ENCODE measurements at regions of chr2 and their contacts with region 1.

Region 1: GRCh38 chr2:119950966-119951365 is 61.9 kb upstream of the EPB41L5 start:
- DNase-seq: no peak
- H3K4me3 Mint-ChIP-seq: no peak overlapping the region
- H3K27ac Mint-ChIP-seq: no peak overlapping the region
- H3K4me1 Mint-ChIP-seq: peaks cover 35% of the 10 kb centered on the region
- H3K27me3 Mint-ChIP-seq: no peaks in the 10 kb centered on the region

Region 2: DNA sequence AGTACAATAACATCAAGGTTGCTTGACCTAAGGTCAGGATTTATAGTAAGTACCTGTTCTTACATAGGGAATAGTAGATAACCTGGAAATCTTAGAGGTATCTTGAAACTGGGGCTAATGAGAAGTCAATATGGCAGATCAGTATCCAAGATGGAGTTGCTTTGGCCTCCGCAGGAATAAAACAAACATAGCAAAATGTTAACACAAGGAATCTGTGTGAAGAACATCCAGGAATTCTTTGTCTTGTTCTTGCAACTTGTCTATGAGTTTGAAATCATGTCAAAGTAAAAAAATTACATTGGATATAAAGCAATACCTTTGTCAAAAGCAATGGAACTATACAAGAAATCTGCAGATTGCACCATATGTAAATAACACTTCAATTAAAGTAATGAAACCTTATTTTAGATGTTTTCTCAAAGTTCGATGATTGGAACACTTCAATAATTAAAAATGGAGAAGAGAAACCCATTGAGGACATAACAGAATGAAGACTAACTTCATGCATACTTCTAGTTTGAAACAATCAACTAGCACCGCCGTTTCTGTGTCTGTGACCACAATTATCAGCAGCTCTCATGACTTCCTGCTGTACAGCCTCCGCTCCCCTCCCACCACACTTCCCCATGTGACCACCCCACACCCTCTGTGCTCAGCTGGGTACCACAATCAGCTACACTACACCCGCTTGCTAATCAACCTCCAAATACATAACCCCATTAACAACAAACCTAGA is 612.0 kb before region 1 on chr2:
- CTCF ChIA-PET with region 1: no interaction called
- POLR2A ChIA-PET with region 1: no interaction called
- intact Hi-C with region 1: no loop called
- DNase-seq: peak; percentile 28
- H3K4me3 Mint-ChIP-seq: no peak overlapping the region
- H3K27ac Mint-ChIP-seq: no peak overlapping the region
- H3K4me1 Mint-ChIP-seq: peaks cover 13% of the 10 kb centered on the region
- H3K27me3 Mint-ChIP-seq: no peaks in the 10 kb centered on the region

Region 3: GRCh38 chr2:119713804-119714490 is 237.0 kb before region 1 on chr2:
- CTCF ChIA-PET with region 1: no interaction called
- POLR2A ChIA-PET with region 1: no interaction called
- intact Hi-C with region 1: no loop called
- DNase-seq: no peak
- H3K4me3 Mint-ChIP-seq: no peak overlapping the region
- H3K27ac Mint-ChIP-seq: no peak overlapping the region
- H3K4me1 Mint-ChIP-seq: peaks cover 4% of the 10 kb centered on the region
- H3K27me3 Mint-ChIP-seq: no peaks in the 10 kb centered on the region

Region 4: GRCh38 chr2:119856469-119856912 is 94.5 kb before region 1 on chr2:
- CTCF ChIA-PET with region 1: no interaction called
- POLR2A ChIA-PET with region 1: no interaction called
- intact Hi-C with region 1: no loop called
- DNase-seq: no peak
- H3K4me3 Mint-ChIP-seq: no peak overlapping the region
- H3K27ac Mint-ChIP-seq: no peak overlapping the region
- H3K4me1 Mint-ChIP-seq: peaks cover 40% of the 10 kb centered on the region
- H3K27me3 Mint-ChIP-seq: no peaks in the 10 kb centered on the region

Region 5: DNA sequence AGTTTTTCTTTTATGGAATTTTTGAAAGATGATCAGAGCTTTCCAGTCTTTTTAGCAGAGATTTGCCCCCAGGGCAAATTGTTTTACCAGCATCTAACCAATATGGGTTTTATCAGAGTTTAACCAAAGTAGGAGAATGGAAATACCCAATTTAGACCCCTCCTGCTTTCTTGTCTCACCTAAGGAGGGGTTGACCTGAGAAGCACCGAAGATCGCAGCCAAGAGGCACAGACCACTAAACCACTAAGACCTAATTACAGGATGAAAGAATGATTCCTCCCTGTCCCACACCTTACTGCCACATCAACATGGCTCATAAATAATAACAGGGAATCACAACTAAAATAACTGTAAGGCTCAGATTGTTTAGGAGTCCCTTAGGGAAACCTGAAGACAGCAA is 50.0 kb before region 1 on chr2:
- CTCF ChIA-PET with region 1: no interaction called
- POLR2A ChIA-PET with region 1: no interaction called
- intact Hi-C with region 1: no loop called
- DNase-seq: no peak
- H3K4me3 Mint-ChIP-seq: no peak overlapping the region
- H3K27ac Mint-ChIP-seq: no peak overlapping the region
- H3K4me1 Mint-ChIP-seq: no peaks in the 10 kb centered on the region
- H3K27me3 Mint-ChIP-seq: no peaks in the 10 kb centered on the region

Region 6: GRCh38 chr2:119983108-119983507 is 32.1 kb after region 1 on chr2:
- CTCF ChIA-PET with region 1: no interaction called
- POLR2A ChIA-PET with region 1: no interaction called
- intact Hi-C with region 1: loop called (anchors 5 kb)
- DNase-seq: no peak
- H3K4me3 Mint-ChIP-seq: no peak overlapping the region
- H3K27ac Mint-ChIP-seq: no peak overlapping the region
- H3K4me1 Mint-ChIP-seq: no peaks in the 10 kb centered on the region
- H3K27me3 Mint-ChIP-seq: no peaks in the 10 kb centered on the region

Measured in activated CD4-positive, alpha-beta memory T cell treated with anti-CD3 and anti-CD28 coated beads for 36 hours (primary cell).